ENCODE measurements at regions of chr6 and their contacts with region 1.

Region 1: DNA sequence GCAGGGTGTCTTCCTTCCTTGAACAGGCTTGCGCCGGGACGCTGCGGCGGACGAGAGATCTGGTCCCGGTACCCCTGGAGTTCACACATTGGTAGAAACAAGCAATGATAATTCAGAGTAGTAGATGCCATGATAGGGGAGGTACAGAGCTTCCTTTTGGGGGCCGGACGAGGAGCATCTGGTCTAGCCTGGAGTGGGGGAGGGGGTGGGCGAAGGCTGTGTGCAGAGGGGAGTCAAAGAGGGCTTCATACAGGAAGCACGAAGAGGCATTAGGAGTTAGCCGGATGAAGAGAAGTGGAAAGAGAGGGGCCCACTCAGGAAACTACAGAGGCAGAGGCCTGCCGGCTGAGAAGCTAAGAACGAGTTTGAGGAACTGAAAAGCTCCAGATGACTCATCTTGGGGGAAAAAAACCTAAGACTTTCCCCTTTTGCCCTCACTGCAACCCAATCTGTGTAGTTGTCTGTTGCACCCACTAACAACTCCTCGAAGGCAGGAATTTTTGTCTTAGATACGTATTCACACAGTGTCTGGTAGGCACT is 611 bp downstream of the CNPY3 start:
- DNase-seq: no peak

Region 2: DNA sequence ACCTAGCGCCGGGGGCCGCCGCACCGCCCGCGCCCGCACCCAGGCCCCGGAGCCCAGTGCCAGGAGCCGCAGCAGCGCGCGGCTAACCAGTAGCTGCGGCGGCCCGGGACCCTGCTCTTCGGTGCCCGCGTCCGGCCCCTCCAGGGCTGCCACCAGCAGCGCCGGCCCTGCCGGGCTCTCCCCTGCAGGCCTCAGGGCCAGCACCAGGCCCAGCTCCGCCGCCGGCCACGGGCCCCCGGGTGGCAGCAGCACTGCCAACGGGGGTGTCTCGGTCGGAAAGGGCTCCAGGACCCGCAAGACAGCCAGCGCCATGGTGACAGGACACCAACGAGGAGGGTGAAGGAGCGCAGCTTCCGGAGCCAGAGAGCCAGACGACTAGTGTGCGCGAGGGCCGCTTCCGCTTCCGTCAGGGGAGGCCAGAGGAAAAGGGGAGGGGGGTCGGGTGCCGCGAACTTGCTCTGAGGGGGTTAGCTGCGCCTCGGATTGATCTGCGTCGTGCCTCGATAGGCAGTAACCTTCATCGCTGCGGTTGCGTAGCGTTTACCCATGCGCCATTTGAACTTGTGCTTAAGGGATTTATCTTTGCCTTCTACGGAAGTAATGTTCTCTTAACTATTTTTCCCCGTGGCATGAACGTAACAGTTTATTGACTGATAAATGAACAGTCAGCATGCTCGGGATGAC is 49.1 kb after region 1 on chr6 and contains the start of gene PEX6:
- intact Hi-C with region 1: loop called (anchors 5 kb)
- DNase-seq: peak; percentile 93
- total RNA-seq, gene PEX6: 14.6 TPM

Region 3: GRCh38 chr6:43053545-43054205 is 123.8 kb after region 1 on chr6 and contains the start of gene CUL7:
- intact Hi-C with region 1: loop called (anchors 5 kb)
- DNase-seq: peak; percentile 96
- total RNA-seq, gene CUL7: 11.0 TPM

Measured in cardiac septum (tissue), 1 donor.